SK-N-SH (cell line): ENCODE measurements at regions of chr16 and their contacts with region 1.

Region 1: DNA sequence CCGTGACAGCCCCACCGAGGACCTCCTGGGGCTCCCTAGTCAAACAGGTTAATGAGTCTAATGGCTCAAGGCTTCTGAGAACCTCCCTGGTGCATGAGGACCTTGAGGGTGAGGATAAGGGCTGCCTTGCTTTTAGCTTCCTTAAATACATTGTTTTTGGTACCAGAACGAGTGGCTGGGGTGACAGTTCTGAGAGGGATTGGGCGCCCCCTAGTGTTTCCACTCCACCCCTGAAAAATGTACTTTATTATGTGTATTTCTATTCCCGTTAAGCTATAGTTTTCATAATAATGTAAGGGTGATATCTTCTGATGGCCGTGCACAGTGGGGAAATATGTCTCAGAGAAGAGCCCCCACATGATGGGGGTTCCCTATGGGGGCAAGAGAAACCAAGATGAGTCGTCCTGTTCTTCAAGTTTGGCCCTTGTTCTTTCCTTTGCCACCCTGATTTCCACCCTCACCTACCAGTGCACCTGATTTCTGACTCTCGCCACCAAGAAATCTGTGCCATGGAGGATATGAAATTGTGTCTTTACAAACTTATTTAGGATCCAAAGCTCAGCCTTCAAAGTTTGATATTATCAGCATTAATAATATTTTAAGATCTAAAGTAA is 14.5 kb upstream of the VWA3A start:
- DNase-seq: peak; percentile 69
- H3K4me3 ChIP-seq: no peak overlapping the region; a peak in 1 of 4 replicates
- H3K27ac ChIP-seq: no peak overlapping the region
- H3K4me1 ChIP-seq: no peaks in the 10 kb centered on the region
- H3K27me3 ChIP-seq: no peaks in the 10 kb centered on the region
- CTCF ChIP-seq: peak; percentile 94
- EP300 ChIP-seq: no peak
- RAD21 ChIP-seq: peak; percentile 83

Region 2: DNA sequence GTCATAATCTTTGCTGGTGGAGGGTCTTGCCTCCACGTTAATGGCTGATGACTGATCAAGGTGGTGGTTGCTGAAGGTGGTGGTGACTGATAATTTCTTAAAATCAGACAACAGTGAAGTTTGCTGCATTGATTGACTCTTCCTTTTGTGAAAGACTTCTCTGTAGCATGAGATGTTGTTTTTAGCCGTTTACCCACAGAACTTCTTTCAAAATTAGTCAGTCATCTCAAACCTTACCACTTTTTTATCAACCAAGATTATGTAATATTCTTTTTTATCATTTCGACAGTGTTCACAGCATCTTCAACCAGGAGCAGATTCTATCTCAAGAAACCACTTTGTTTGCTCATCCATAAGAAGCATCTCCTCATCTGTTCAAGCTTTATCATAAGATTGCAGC is 118.8 kb before region 1 on chr16:
- CTCF ChIA-PET with region 1: interaction called, 16 read pairs
- POLR2A ChIA-PET with region 1: no interaction called
- DNase-seq: no peak
- H3K4me3 ChIP-seq: no peak overlapping the region
- H3K27ac ChIP-seq: no peak overlapping the region
- H3K4me1 ChIP-seq: peaks cover 4 to 5% of the 10 kb centered on the region in 2 experiments; a peak in 3 of 4 replicates
- H3K27me3 ChIP-seq: no peaks in the 10 kb centered on the region
- CTCF ChIP-seq: no peak
- EP300 ChIP-seq: no peak
- RAD21 ChIP-seq: no peak

Region 3: DNA sequence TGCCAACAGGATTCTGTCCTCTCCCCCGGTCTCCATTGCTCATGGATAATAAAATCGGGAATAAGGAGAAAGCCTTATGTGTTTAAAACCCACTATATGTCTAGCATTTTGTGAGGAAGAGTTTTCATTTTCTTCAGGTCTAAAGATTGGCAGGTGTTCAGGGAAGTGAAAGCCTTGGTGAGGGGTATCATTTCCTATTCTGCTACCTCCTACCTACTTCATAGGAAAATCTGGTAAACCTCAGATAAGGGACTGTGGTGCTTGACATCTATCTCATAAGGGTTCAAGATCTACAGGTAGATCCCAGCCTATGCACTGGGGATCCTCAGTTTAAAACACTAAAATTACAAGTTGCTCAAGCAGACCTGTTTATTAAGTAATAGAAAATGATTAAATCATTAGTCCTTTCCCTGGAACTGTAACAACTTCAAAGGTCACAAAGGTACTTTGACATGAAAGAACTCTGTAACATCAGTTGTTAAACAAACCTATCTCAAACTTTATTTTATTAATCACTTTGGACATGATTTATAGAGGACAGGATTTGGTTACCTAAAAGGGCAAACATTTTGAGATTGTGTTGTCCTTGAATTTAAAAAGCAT is 63.4 kb before region 1 on chr16:
- CTCF ChIA-PET with region 1: interaction called, 95 read pairs
- POLR2A ChIA-PET with region 1: no interaction called
- DNase-seq: no peak
- H3K4me3 ChIP-seq: no peak overlapping the region
- H3K27ac ChIP-seq: no peak overlapping the region
- H3K4me1 ChIP-seq: peaks cover 0 to 6% of the 10 kb centered on the region in 2 experiments; a peak in 2 of 4 replicates
- H3K27me3 ChIP-seq: no peaks in the 10 kb centered on the region
- CTCF ChIP-seq: no peak
- EP300 ChIP-seq: no peak
- RAD21 ChIP-seq: no peak

Region 4: DNA sequence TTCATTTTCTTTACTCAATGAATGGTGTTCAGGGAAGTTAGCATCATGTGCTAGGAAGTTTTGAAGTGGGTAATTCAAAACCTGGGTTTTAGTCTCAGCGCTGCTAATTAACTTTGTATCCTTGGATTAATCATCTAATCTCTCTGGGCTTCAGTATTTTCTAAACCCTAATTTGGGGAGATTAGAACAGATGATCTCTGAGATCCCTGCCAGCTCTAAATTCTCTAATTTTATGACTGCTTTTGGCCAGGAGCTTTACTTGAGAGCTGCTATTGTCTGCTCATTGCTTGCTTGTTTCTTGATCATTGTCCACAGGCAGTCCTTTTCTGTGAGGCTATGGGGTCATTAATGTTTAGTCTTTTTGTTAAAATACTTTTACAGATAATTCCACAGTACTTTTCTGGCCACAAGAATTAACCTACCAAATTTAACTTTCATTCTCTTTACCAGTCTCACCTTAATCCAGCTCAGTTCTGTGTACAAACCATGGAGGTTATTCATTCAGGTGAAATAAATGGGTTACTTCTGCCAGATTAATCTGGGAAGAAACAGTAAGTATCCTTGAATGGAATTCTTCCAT is 13.8 kb before region 1 on chr16:
- CTCF ChIA-PET with region 1: interaction called, 58 read pairs
- POLR2A ChIA-PET with region 1: no interaction called
- DNase-seq: no peak
- H3K4me3 ChIP-seq: no peak overlapping the region
- H3K27ac ChIP-seq: no peak overlapping the region
- H3K4me1 ChIP-seq: no peaks in the 10 kb centered on the region; a peak in 2 of 4 replicates
- H3K27me3 ChIP-seq: no peaks in the 10 kb centered on the region
- CTCF ChIP-seq: no peak
- EP300 ChIP-seq: no peak
- RAD21 ChIP-seq: no peak

Region 5: GRCh38 chr16:22109258-22109898 is 31.6 kb after region 1 on chr16:
- CTCF ChIA-PET with region 1: interaction called, 10 read pairs
- POLR2A ChIA-PET with region 1: no interaction called
- DNase-seq: no peak
- H3K4me3 ChIP-seq: no peak overlapping the region
- H3K27ac ChIP-seq: no peak overlapping the region
- H3K4me1 ChIP-seq: no peaks in the 10 kb centered on the region
- H3K27me3 ChIP-seq: peaks cover 9% of the 10 kb centered on the region
- CTCF ChIP-seq: no peak
- EP300 ChIP-seq: no peak
- RAD21 ChIP-seq: no peak

Region 6: DNA sequence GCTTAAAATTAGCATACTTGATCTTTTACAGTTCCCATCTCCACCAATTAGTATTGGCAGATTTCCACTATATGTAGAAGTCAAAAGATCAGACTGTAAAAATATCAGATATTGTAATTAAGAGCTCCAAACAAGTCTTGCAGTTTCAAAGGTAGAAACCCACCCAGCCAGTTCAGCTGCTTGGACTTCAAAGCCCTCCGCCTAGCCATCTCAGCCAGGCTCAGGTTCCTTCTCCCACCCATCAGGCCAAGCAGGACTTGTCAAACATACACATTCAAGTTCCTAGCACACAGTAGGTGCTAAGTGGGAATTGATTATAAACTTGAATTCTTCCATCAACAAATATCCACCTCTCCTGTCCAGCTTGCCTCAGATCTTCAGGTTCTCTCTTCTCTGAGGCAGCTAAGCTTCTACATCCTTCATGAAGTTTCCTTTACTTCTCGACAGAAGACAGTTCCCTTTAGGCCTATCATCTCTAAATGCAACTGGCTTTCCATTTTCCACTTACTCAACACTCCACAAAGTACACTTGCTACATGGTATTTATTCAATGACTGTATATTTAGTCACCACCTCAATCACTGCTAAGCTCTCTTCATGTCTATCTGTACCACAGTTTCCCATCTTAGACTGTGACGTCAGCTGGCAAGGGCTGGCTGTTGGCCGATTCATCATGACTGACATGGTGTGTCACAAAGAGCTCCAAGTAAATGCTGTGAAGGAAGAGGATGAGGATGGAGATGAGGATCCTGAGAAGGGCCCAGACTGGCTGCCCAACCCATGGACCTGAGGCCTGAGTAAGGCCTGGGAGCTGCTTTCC is 1388.5 kb after region 1 on chr16:
- CTCF ChIA-PET with region 1: no interaction called
- POLR2A ChIA-PET with region 1: no interaction called
- DNase-seq: no peak
- H3K4me3 ChIP-seq: no peak overlapping the region
- H3K27ac ChIP-seq: peak overlapping the region in 1 of 2 experiments; percentile 66; a peak in 2 of 4 replicates
- H3K4me1 ChIP-seq: peaks cover 0 to 4% of the 10 kb centered on the region in 2 experiments; a peak in 1 of 4 replicates
- H3K27me3 ChIP-seq: no peaks in the 10 kb centered on the region
- CTCF ChIP-seq: no peak
- EP300 ChIP-seq: no peak
- RAD21 ChIP-seq: no peak